ENCODE measurements at regions of chr1 and their contacts with region 1.

Region 1: GRCh38 chr1:235855811-235856429 is 10.8 kb downstream of the LYST start:
- DNase-seq: no peak
- H3K4me3 Mint-ChIP-seq: no peak overlapping the region
- H3K27ac Mint-ChIP-seq: no peak overlapping the region
- H3K4me1 Mint-ChIP-seq: peaks cover 47% of the 10 kb centered on the region
- H3K27me3 Mint-ChIP-seq: no peaks in the 10 kb centered on the region

Region 2: GRCh38 chr1:235703506-235703905 is 152.4 kb before region 1 on chr1:
- CTCF ChIA-PET with region 1: no interaction called
- POLR2A ChIA-PET with region 1: no interaction called
- intact Hi-C with region 1: no loop called
- DNase-seq: no peak
- H3K4me3 Mint-ChIP-seq: no peak overlapping the region
- H3K27ac Mint-ChIP-seq: no peak overlapping the region
- H3K4me1 Mint-ChIP-seq: peaks cover 7% of the 10 kb centered on the region
- H3K27me3 Mint-ChIP-seq: no peaks in the 10 kb centered on the region

Region 3: DNA sequence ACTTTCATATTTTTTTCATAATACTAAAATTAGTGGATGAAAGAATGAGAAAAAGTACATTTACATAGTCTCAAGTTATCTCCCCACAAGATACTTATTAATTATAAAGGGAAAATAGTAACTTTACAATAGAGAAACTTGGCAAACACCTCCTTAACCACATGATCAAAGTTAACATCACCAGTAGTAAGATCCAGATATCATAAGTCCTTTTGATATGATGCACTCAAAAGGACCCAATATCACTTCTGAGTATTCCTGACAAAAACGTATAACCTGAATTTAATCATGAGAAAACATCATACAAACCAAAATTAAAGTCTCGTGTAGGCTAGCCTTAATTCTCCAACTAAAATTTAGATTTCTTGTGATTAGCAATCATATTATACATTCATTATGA is 56.7 kb before region 1 on chr1:
- CTCF ChIA-PET with region 1: no interaction called
- POLR2A ChIA-PET with region 1: no interaction called
- intact Hi-C with region 1: loop called (anchors 1 kb)
- DNase-seq: no peak
- H3K4me3 Mint-ChIP-seq: no peak overlapping the region
- H3K27ac Mint-ChIP-seq: no peak overlapping the region
- H3K4me1 Mint-ChIP-seq: peaks cover 6% of the 10 kb centered on the region
- H3K27me3 Mint-ChIP-seq: no peaks in the 10 kb centered on the region

Region 4: DNA sequence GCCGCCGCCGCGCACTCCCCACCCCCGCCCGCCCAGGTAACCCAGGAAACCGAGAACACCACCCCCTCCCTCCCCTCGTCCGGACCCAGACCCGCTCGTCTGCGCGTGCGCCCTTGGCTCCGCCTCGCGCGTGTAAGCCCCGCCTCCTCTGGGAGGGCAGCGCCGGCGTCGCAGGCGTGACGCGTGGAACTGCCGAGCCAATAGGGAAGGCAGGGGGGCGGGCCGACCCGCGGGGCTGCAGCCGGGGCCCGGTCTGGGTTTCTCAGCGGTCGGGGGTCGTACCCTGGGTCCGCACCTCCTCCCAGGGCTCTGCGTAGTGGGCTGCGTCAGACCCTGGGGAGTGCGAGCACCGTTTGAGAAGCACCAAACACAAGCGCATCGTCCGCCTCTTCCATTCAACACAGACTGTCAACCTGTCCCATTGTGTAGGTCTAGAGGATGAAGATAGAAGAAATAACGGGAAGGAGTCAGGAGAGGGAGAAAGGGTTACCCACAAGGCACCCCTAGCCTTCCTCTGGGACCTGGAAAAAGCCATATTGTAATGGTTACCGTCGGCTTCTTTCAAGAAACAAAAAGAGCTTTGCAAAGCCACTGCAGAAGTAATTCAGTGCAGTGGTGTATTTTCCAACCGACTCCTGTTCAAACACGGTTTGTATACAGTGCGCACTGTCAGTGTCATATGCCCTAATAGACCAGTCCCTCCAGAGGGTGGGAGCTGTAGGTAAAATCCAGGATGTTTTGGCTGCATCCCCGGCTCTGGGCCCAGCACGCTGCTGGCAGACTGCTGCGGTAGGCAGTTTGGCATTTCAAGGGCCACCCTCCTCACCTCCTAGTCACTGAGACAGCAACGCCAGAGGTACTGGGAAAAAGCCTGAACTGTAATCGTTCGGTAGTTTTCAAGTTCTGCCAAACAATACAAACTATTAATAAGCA is 11.3 kb after region 1 on chr1:
- CTCF ChIA-PET with region 1: interaction called, 6 read pairs
- POLR2A ChIA-PET with region 1: interaction called, 37 read pairs
- intact Hi-C with region 1: loop called (anchors 1 kb)
- DNase-seq: peak; percentile 98
- H3K4me3 Mint-ChIP-seq: peak overlapping the region; percentile 89
- H3K27ac Mint-ChIP-seq: peak overlapping the region; percentile 98
- H3K4me1 Mint-ChIP-seq: peaks cover 45% of the 10 kb centered on the region
- H3K27me3 Mint-ChIP-seq: no peaks in the 10 kb centered on the region

Region 5: DNA sequence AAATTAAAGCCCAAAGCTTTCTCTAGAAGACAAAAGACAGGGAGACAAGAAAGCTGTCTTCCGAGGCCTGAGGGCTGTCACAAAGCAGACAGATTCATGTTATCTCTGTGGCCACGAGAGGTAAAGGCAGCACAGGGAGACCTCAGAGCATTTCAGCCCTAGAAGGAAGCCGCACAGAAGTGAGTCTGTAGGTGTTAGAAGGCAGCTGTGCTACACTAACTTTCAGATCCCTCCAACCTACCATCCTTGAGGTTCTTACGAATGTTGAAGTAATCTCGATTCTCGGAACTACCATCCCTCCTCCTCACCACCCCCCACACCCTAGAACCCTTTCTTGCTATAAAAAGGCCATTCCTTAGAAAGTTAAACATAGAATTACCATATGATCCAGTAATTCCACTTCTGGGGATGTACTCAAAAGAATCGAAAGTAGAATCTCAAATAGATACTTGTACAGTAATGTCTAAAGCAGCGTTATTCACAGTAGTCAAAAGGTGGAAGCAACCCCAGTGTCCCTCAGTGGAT is 32.3 kb after region 1 on chr1:
- CTCF ChIA-PET with region 1: interaction called, 5 read pairs
- POLR2A ChIA-PET with region 1: interaction called, 7 read pairs
- intact Hi-C with region 1: loop called (anchors 1 kb)
- DNase-seq: peak; percentile 78
- H3K4me3 Mint-ChIP-seq: peak overlapping the region; percentile 20
- H3K27ac Mint-ChIP-seq: peak overlapping the region; percentile 80
- H3K4me1 Mint-ChIP-seq: peaks cover 46% of the 10 kb centered on the region
- H3K27me3 Mint-ChIP-seq: no peaks in the 10 kb centered on the region

Region 6: GRCh38 chr1:235954306-235955283 is 98.7 kb after region 1 on chr1:
- CTCF ChIA-PET with region 1: interaction called, 3 read pairs
- POLR2A ChIA-PET with region 1: interaction called, 5 read pairs
- intact Hi-C with region 1: loop called (anchors 1 kb)
- DNase-seq: peak; percentile 67
- H3K4me3 Mint-ChIP-seq: no peak overlapping the region
- H3K27ac Mint-ChIP-seq: no peak overlapping the region
- H3K4me1 Mint-ChIP-seq: peaks cover 33% of the 10 kb centered on the region
- H3K27me3 Mint-ChIP-seq: no peaks in the 10 kb centered on the region

Region 7: GRCh38 chr1:236507022-236507700 is 651.2 kb after region 1 on chr1:
- CTCF ChIA-PET with region 1: no interaction called
- POLR2A ChIA-PET with region 1: no interaction called
- intact Hi-C with region 1: loop called (anchors 5 kb)
- DNase-seq: no peak
- H3K4me3 Mint-ChIP-seq: no peak overlapping the region
- H3K27ac Mint-ChIP-seq: no peak overlapping the region
- H3K4me1 Mint-ChIP-seq: peaks cover 37% of the 10 kb centered on the region
- H3K27me3 Mint-ChIP-seq: no peaks in the 10 kb centered on the region

Region 8: GRCh38 chr1:236590553-236591150 is 734.7 kb after region 1 on chr1:
- CTCF ChIA-PET with region 1: no interaction called
- POLR2A ChIA-PET with region 1: no interaction called
- intact Hi-C with region 1: no loop called
- DNase-seq: no peak
- H3K4me3 Mint-ChIP-seq: no peak overlapping the region
- H3K27ac Mint-ChIP-seq: no peak overlapping the region
- H3K4me1 Mint-ChIP-seq: peaks cover 19% of the 10 kb centered on the region
- H3K27me3 Mint-ChIP-seq: no peaks in the 10 kb centered on the region

Measured in activated CD4-positive, alpha-beta memory T cell treated with anti-CD3 and anti-CD28 coated beads for 36 hours (primary cell).